ENCODE measurements at regions of chr15 and their contacts with region 1.

Region 1: GRCh38 chr15:63600616-63601025 is 3.4 kb downstream of the FBXL22 start:
- DNase-seq: peak; percentile 90 to 98
- ATAC-seq: peak; percentile 89 to 96 (median 90)
- H3K4me3 ChIP-seq: peak overlapping the region; percentile 79
- H3K4me3 Mint-ChIP-seq: peak overlapping the region; percentile 92
- H3K27ac ChIP-seq: peak overlapping the region; percentile 70
- H3K27ac Mint-ChIP-seq: peak overlapping the region; percentile 77 to 84
- H3K4me1 ChIP-seq: peaks cover 34% of the 10 kb centered on the region
- H3K4me1 Mint-ChIP-seq: peaks cover 33 to 56% of the 10 kb centered on the region in 2 donors
- H3K27me3 ChIP-seq: no peaks in the 10 kb centered on the region
- H3K27me3 Mint-ChIP-seq: no peaks in the 10 kb centered on the region
- CTCF ChIP-seq: no peak

Region 2: GRCh38 chr15:63466378-63467192 is 134.0 kb before region 1 on chr15:
- intact Hi-C with region 1: loop called (anchors 1 kb)
- DNase-seq: peak; percentile 26 to 89
- ATAC-seq: peak; percentile 86 to 97 (median 97)
- H3K4me3 ChIP-seq: no peak overlapping the region
- H3K4me3 Mint-ChIP-seq: no peak overlapping the region
- H3K27ac ChIP-seq: no peak overlapping the region
- H3K27ac Mint-ChIP-seq: no peak overlapping the region
- H3K4me1 ChIP-seq: peaks cover 6% of the 10 kb centered on the region
- H3K4me1 Mint-ChIP-seq: peaks cover 0 to 9% of the 10 kb centered on the region in 2 donors
- H3K27me3 ChIP-seq: no peaks in the 10 kb centered on the region
- H3K27me3 Mint-ChIP-seq: peaks cover 6 to 23% of the 10 kb centered on the region in 2 donors
- CTCF ChIP-seq: peak; percentile 74

Region 3: DNA sequence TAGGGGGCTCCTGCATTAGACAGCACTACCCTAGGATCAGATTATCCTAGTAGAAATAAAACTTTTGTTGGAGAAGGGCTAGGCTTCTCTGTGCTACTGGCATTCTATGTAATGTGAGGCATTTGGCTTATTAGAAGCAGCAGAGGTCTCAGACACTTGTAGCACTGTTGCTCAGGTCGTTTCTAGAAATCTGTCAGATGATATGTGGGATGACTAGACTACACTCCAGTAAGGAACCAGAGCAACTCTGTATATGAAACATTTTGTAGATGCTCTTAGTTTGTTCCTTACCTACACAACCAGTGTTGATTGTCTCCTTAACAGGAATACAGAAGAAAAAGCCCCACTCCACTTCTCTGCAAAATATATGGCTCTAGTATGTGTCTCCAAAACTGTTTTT is 25.3 kb before region 1 on chr15:
- intact Hi-C with region 1: loop called (anchors 1 kb)
- DNase-seq: no peak
- ATAC-seq: no peak
- H3K4me3 ChIP-seq: no peak overlapping the region
- H3K4me3 Mint-ChIP-seq: no peak overlapping the region
- H3K27ac ChIP-seq: no peak overlapping the region
- H3K27ac Mint-ChIP-seq: no peak overlapping the region
- H3K4me1 ChIP-seq: no peaks in the 10 kb centered on the region
- H3K4me1 Mint-ChIP-seq: peaks cover 0 to 6% of the 10 kb centered on the region in 2 donors
- H3K27me3 ChIP-seq: no peaks in the 10 kb centered on the region
- H3K27me3 Mint-ChIP-seq: no peaks in the 10 kb centered on the region
- CTCF ChIP-seq: no peak

Region 4: GRCh38 chr15:63668601-63669000 is 68.0 kb after region 1 on chr15:
- intact Hi-C with region 1: no loop called
- DNase-seq: peak in 1 of 2 donors; percentile 52
- ATAC-seq: peak; percentile 68 to 81 (median 81)
- H3K4me3 ChIP-seq: no peak overlapping the region
- H3K4me3 Mint-ChIP-seq: peak overlapping the region; percentile 61
- H3K27ac ChIP-seq: peak overlapping the region; percentile 82
- H3K27ac Mint-ChIP-seq: peak overlapping the region; percentile 90 to 91
- H3K4me1 ChIP-seq: peaks cover 4% of the 10 kb centered on the region
- H3K4me1 Mint-ChIP-seq: peaks cover 36 to 45% of the 10 kb centered on the region in 2 donors
- H3K27me3 ChIP-seq: no peaks in the 10 kb centered on the region
- H3K27me3 Mint-ChIP-seq: no peaks in the 10 kb centered on the region
- CTCF ChIP-seq: no peak

Measured in natural killer cell (primary cell).